MCF 10A (cell line): ENCODE measurements at regions of chr5 and their contacts with region 1.

Region 1: GRCh38 chr5:134004592-134005375 is at the start of gene VDAC1:
- DNase-seq: peak; percentile 82
- H3K4me3 Mint-ChIP-seq: peak within 1 kb of the TSS; percentile 90
- H3K27ac Mint-ChIP-seq: peak within 1 kb of the TSS; percentile 95
- H3K4me1 Mint-ChIP-seq: peaks cover 40% of the 10 kb centered on the region
- H3K27me3 Mint-ChIP-seq: no peaks in the 10 kb centered on the region
- CTCF ChIP-seq: no peak
- total RNA-seq, gene VDAC1: 262 and 334 TPM in 2 replicates

Region 2: GRCh38 chr5:133877351-133878235 is 127.2 kb before region 1 on chr5:
- CTCF ChIA-PET with region 1: no interaction called
- POLR2A ChIA-PET with region 1: no interaction called
- intact Hi-C with region 1: no loop called
- DNase-seq: no peak
- H3K4me3 Mint-ChIP-seq: no peak overlapping the region
- H3K27ac Mint-ChIP-seq: no peak overlapping the region
- H3K4me1 Mint-ChIP-seq: no peaks in the 10 kb centered on the region
- H3K27me3 Mint-ChIP-seq: peaks cover 72% of the 10 kb centered on the region
- CTCF ChIP-seq: no peak

Region 3: GRCh38 chr5:133957080-133957479 is 47.7 kb before region 1 on chr5:
- CTCF ChIA-PET with region 1: no interaction called
- POLR2A ChIA-PET with region 1: no interaction called
- intact Hi-C with region 1: no loop called
- DNase-seq: no peak
- H3K4me3 Mint-ChIP-seq: no peak overlapping the region
- H3K27ac Mint-ChIP-seq: no peak overlapping the region
- H3K4me1 Mint-ChIP-seq: peaks cover under 1% of the 10 kb centered on the region
- H3K27me3 Mint-ChIP-seq: no peaks in the 10 kb centered on the region
- CTCF ChIP-seq: no peak

Region 4: DNA sequence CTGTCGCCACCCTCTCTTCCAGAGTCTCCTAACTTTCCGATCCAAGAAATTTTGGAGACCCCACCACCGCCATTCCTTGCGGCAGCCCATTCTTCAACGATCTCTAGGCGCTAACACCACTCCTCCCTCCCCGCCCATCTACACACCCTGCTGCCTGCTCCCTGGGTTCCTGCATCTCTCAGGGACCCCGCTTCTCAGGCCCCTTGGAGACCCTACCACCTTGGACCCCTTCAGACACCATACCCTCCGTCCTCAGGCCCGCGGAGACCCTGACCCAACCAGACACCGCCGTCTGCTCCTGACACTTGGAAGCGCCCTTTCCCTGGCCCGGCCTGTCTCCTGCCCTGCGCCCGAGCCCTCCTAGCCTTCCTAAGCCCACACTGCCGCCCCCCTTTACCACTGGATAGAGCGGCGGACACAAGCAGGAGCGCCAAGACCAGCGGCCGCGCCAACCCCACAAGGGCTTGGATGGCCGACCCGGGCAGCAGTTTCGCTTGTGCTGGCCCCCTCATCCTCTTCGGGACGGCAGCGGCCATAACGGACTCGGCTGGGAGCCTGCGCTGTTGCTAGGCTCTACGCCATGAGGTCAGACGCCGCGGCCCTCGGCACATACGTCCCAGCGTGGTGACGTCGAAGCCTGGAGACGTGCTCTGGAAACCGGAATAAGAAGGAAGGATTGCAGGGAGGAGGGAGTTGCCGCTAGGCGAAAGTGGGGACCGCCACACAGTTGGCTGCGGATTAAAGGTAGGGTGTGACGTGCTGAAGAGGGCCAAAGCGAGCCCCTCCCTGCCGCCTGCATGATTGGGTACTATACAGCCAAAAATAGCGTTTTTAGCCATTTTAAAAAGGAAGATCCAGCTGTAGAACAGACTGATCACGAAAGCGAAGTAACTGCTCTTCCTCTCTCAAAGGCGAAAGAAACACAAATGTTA is 36.5 kb before region 1 on chr5 and contains the start of gene C5orf15:
- CTCF ChIA-PET with region 1: interaction called, 3 read pairs
- POLR2A ChIA-PET with region 1: interaction called, 28 read pairs
- intact Hi-C with region 1: no loop called
- DNase-seq: peak; percentile 99
- H3K4me3 Mint-ChIP-seq: peak within 1 kb of the TSS; percentile 100
- H3K27ac Mint-ChIP-seq: peak within 1 kb of the TSS; percentile 99
- H3K4me1 Mint-ChIP-seq: peaks cover 30% of the 10 kb centered on the region
- H3K27me3 Mint-ChIP-seq: no peaks in the 10 kb centered on the region
- CTCF ChIP-seq: no peak
- total RNA-seq, gene C5orf15: 35.1 and 53.2 TPM in 2 replicates

Region 5: DNA sequence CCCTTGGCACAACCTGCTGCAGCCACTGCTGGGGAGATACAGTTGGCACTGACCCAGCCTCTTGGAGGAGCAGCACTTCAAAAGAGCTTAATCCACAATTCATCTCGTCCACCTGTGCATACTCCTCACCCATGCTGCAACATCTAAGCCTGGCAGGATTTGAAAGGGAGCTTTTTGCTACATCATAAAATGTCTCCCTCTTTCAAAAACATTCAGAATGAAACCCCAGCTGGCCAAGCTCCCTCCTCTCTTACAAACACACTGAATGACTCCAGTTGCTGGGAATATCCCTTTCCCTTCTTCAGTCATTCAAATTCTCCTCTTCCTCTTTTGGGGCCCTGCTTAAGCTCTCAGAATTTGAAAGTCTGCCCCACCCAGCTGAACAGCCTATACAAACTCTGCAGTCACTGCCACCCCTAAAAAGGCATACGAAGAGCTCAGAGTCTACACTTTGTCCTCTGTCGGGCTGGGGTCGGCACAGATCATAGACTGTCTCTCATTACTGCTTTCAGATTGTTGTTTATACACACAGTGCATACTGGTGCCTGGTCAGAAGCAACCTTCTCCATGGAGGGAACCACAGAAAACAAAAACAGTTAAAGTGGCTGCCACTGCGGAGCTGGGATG is 27.5 kb before region 1 on chr5:
- CTCF ChIA-PET with region 1: interaction called, 43 read pairs
- POLR2A ChIA-PET with region 1: interaction called, 10 read pairs
- intact Hi-C with region 1: no loop called
- DNase-seq: no peak
- H3K4me3 Mint-ChIP-seq: no peak overlapping the region
- H3K27ac Mint-ChIP-seq: peak overlapping the region; percentile 49
- H3K4me1 Mint-ChIP-seq: no peaks in the 10 kb centered on the region
- H3K27me3 Mint-ChIP-seq: no peaks in the 10 kb centered on the region
- CTCF ChIP-seq: no peak

Region 6: GRCh38 chr5:134073404-134073803 is 68.6 kb after region 1 on chr5:
- CTCF ChIA-PET with region 1: no interaction called
- POLR2A ChIA-PET with region 1: no interaction called
- intact Hi-C with region 1: no loop called
- DNase-seq: no peak
- H3K4me3 Mint-ChIP-seq: no peak overlapping the region
- H3K27ac Mint-ChIP-seq: no peak overlapping the region
- H3K4me1 Mint-ChIP-seq: no peaks in the 10 kb centered on the region
- H3K27me3 Mint-ChIP-seq: no peaks in the 10 kb centered on the region
- CTCF ChIP-seq: no peak